Mammary epithelial cell (primary cell): ENCODE measurements at regions of chr11 and their contacts with region 1.

Region 1: GRCh38 chr11:65859200-65859811 is 927 bp upstream of the MUS81 start:
- DNase-seq: peak; percentile 93
- H3K4me3 ChIP-seq: peak overlapping the region; percentile 76 to 97 (median 84)
- H3K27ac ChIP-seq: peak overlapping the region; percentile 70
- H3K4me1 ChIP-seq: peaks cover 35% of the 10 kb centered on the region
- H3K27me3 ChIP-seq: no peaks in the 10 kb centered on the region
- CTCF ChIP-seq: no peak

Region 2: GRCh38 chr11:65826962-65827735 is 32.2 kb before region 1 on chr11:
- CTCF ChIA-PET with region 1: no interaction called
- dilution Hi-C with region 1: loop called (anchors 5 kb)
- in situ Hi-C with region 1: no loop called
- intact Hi-C with region 1: no loop called
- DNase-seq: no peak
- H3K4me3 ChIP-seq: no peak overlapping the region
- H3K27ac ChIP-seq: no peak overlapping the region
- H3K4me1 ChIP-seq: no peaks in the 10 kb centered on the region
- H3K27me3 ChIP-seq: no peaks in the 10 kb centered on the region
- CTCF ChIP-seq: no peak

Region 3: GRCh38 chr11:65873318-65874156 is 14.2 kb after region 1 on chr11:
- CTCF ChIA-PET with region 1: interaction called, 7 read pairs
- dilution Hi-C with region 1: no loop called
- in situ Hi-C with region 1: no loop called
- intact Hi-C with region 1: loop called (anchors 1 kb)
- DNase-seq: peak; percentile 88
- H3K4me3 ChIP-seq: peak overlapping the region; percentile 51 to 75 (median 64)
- H3K27ac ChIP-seq: peak overlapping the region; percentile 36
- H3K4me1 ChIP-seq: peaks cover 10% of the 10 kb centered on the region
- H3K27me3 ChIP-seq: no peaks in the 10 kb centered on the region
- CTCF ChIP-seq: no peak

Region 4: GRCh38 chr11:65900125-65900898 is 41.0 kb after region 1 on chr11 and contains the start of gene FOSL1:
- CTCF ChIA-PET with region 1: interaction called, 4 read pairs
- dilution Hi-C with region 1: loop called (anchors 5 kb)
- in situ Hi-C with region 1: no loop called
- intact Hi-C with region 1: no loop called
- DNase-seq: peak; percentile 99
- H3K4me3 ChIP-seq: peak within 1 kb of the TSS; percentile 68 to 88 (median 83)
- H3K27ac ChIP-seq: peak within 1 kb of the TSS; percentile 86
- H3K4me1 ChIP-seq: peaks cover 58% of the 10 kb centered on the region
- H3K27me3 ChIP-seq: no peaks in the 10 kb centered on the region
- CTCF ChIP-seq: no peak
- total RNA-seq, gene FOSL1: 12.5 to 275 TPM